Motor neuron (in vitro differentiated cells): ENCODE measurements at regions of chr21 and their contacts with region 1.

Region 1: DNA sequence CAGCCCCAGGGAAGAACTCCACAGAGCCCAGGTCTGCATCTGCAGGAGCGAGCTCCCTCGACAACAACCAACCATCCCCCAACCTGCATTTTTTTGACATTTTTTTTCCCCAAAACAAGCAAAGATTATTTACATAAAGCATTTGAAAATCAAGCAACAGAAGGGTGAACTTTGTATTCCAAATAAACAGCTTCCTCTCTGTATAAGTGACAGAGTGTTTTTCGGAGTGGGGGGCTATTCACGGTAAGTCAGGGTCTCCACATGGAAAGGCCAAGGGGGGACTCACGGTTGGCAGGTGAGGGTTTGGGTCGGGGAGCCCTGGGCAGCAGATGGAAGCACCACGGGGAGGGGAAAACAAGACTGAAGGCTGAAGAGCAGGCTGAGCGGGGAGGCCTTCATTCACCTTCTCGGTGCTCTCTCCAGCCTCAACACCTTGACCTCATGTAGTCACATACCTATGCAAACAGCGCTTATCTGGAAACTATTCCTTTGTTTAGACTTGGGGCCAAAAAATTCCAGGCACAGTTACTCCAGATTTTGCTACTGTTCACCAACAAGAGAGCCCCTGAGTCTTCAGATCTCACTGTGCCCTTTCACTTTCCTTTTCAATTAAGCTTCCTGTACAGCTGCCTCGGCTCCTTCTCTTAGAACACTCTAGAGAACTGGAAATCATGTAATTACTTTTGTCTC is 27.6 kb downstream of the C2CD2 start:
- ATAC-seq: peak in 4 of 8 experiments; percentile 48 to 89 (median 80)
- H3K4me3 ChIP-seq: no peak overlapping the region
- H3K27ac ChIP-seq: no peak overlapping the region
- H3K4me1 ChIP-seq: peaks cover 0 to 7% of the 10 kb centered on the region in 2 donors

Region 2: DNA sequence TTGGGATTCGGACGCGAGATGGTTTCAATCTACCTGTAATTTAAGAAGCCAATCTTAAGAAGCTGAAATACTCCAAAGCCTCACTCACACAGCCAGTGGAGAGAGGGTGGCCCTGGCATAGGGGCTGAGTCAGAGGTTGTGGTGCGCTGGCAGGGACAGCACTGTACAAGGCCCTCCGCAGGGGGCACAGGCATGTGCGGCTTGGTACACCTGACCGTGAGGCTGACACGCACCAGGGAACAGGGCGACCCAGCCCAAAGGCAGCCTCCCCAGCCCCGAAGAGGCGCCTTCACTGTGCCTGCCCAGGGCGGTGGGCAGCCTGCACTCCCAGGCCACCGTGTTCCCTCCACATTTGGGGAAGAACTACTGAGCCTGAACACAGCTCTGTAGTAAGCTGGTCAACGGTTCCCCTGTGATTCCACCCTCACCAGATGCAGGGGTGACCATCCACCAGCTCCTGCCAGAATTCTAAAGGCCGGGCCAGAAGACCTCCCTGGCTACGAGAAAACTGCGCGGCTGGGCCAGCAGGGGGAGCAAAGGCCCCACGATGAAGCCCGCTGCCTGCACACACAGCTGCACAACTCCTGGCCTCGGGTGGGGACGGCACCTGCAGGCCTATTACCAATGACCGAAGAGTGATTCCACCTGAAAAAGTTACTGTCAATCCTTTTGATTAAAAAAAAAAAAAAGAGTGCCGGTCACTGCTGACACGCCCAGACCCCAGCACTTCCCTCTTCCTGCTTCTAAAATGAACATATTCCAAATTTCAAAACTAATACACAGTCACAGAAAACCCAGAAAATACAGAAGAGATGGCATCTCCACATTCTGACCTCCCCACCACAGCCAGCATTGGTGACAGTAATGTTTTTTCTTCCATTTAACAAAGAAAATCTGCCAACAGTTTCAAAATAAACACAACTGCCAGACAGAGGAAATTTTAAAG is 109.8 kb before region 1 on chr21:
- in situ Hi-C with region 1: loop called in 1 of 9 experiments (anchors 25 kb)
- ATAC-seq: peak; percentile 76 to 94 (median 79)
- H3K4me3 ChIP-seq: no peak overlapping the region
- H3K27ac ChIP-seq: no peak overlapping the region
- H3K4me1 ChIP-seq: no peaks in the 10 kb centered on the region

Region 3: GRCh38 chr21:42289926-42290325 is 363.7 kb after region 1 on chr21:
- in situ Hi-C with region 1: no loop called
- ATAC-seq: no peak
- H3K4me3 ChIP-seq: no peak overlapping the region
- H3K27ac ChIP-seq: no peak overlapping the region
- H3K4me1 ChIP-seq: no peaks in the 10 kb centered on the region